Caco-2 (cell line): ENCODE measurements at regions of chr10 and their contacts with region 1.

Region 1: DNA sequence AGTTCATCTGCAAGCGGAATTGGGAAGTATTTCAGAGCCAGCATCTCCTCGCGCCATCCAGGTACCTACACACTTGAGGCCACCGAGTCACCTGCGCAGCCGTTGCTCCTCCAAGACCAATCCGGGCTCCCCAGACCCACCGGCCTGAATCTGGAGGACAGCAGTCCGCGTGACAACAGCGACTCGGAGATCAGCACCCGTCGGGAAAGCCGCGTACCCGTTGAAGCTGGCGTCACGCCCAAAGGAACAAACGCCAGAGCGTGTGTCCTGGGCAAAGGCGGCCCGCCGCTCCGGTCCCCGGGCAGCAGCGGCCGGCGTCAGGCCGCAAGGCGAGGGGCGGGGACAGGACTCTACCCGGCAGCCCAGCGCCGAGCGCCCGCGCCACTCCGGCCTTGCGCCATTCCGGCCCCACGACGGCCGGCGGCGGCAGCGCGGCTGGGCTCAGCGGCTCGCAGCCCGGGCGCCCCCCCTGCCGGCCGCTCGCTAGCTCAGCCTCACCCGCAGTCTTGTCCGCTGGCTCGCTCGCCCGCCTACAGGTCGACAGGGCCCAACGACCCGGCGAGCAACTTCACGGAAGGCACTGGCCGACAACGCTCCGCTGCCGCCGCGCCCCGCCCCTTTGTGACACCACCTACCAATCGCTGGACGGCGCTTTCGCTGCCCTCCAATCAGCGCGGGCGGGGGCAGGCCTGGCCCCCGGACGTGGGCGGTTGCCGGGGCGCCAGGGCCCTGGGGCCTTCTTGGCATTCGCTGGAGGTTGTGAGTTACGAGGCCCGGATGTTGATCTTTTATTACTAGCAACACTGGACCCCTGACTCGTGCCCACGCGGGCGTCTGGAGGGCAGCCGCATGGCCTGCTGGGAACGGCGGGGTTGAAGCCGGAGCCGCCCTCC is at the start of gene ZFAND4:
- DNase-seq: peak; percentile 99 to 100
- H3K4me3 ChIP-seq: peak within 1 kb of the TSS; percentile 62
- H3K4me3 Mint-ChIP-seq: peak within 1 kb of the TSS; percentile 80
- H3K27ac Mint-ChIP-seq: peak within 1 kb of the TSS; percentile 55
- H3K4me1 ChIP-seq: 0 out of 2 replicates have a peak, but pooled peaks cover 5% of the 10 kb centered on the region
- H3K4me1 Mint-ChIP-seq: peaks cover 7% of the 10 kb centered on the region
- H3K27me3 ChIP-seq: no peaks in the 10 kb centered on the region
- H3K27me3 Mint-ChIP-seq: peaks cover 12% of the 10 kb centered on the region
- CTCF ChIP-seq: peak; percentile 79 to 80
- total RNA-seq, gene ZFAND4: 8.8 and 9.3 TPM in 2 replicates

Region 2: GRCh38 chr10:45235798-45236231 is 436.6 kb before region 1 on chr10:
- CTCF ChIA-PET with region 1: no interaction called
- POLR2A ChIA-PET with region 1: no interaction called
- intact Hi-C with region 1: loop called (anchors 1 kb)
- DNase-seq: no peak
- H3K4me3 ChIP-seq: no peak overlapping the region
- H3K4me3 Mint-ChIP-seq: no peak overlapping the region
- H3K27ac Mint-ChIP-seq: no peak overlapping the region
- H3K4me1 ChIP-seq: no peaks in the 10 kb centered on the region
- H3K4me1 Mint-ChIP-seq: no peaks in the 10 kb centered on the region
- H3K27me3 ChIP-seq: no peaks in the 10 kb centered on the region
- H3K27me3 Mint-ChIP-seq: peaks cover 11% of the 10 kb centered on the region
- CTCF ChIP-seq: no peak

Region 3: DNA sequence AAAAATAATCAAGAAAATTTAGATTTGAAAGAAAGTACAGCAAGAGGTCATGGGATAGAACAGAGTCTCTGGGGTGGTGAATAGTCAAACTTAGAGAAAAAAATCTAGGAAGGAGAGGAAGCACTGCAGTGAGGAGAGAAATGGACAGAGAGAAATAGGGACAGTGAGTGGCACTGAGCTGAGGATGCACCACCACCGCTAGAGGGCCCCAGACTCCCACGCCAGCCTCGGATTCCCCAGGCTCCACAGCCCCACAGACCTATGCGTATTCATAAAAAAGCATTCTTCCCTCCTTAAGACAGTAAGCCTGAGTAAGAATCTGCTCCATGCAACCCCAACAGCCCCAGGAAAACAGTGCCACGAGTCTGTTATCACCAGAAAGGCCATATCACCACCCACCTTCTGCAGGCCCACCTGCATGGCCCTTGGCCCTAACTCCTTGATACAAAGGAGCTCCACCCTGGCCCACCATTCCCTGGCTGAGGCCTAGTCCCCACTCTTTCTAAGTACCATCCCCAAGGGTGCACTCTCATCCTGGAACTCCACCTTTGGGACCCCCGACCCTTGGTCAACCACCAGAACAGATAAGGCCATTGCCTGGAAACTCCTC is 207.4 kb before region 1 on chr10:
- CTCF ChIA-PET with region 1: interaction called, 18 read pairs
- POLR2A ChIA-PET with region 1: no interaction called
- intact Hi-C with region 1: loop called (anchors 1 kb)
- DNase-seq: peak; percentile 75 to 88
- H3K4me3 ChIP-seq: no peak overlapping the region
- H3K4me3 Mint-ChIP-seq: no peak overlapping the region
- H3K27ac Mint-ChIP-seq: no peak overlapping the region
- H3K4me1 ChIP-seq: 0 out of 2 replicates have a peak, but pooled peaks cover under 1% of the 10 kb centered on the region
- H3K4me1 Mint-ChIP-seq: no peaks in the 10 kb centered on the region
- H3K27me3 ChIP-seq: no peaks in the 10 kb centered on the region
- H3K27me3 Mint-ChIP-seq: peaks cover 3% of the 10 kb centered on the region
- CTCF ChIP-seq: peak; percentile 98 to 99

Region 4: DNA sequence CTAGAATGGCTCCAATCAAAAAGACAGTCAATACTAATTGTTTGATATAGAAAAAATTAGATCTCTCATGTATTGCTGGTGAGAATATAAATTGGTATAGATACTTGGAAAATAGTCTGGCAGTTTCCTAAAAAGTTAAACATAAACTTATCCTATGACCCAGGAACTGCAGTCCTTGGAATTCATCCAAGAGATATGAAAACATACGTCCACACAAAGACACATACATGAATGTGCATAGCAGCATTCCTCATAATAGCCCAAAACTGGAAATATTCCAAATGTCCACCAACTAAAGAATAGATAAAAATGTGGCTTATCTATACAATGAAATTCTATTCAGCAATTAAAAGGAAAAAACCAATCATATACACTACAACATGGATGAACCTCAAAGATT is 128.2 kb before region 1 on chr10:
- CTCF ChIA-PET with region 1: no interaction called
- POLR2A ChIA-PET with region 1: no interaction called
- intact Hi-C with region 1: no loop called
- DNase-seq: no peak
- H3K4me3 ChIP-seq: no peak overlapping the region
- H3K4me3 Mint-ChIP-seq: no peak overlapping the region
- H3K27ac Mint-ChIP-seq: no peak overlapping the region
- H3K4me1 ChIP-seq: no peaks in the 10 kb centered on the region
- H3K4me1 Mint-ChIP-seq: no peaks in the 10 kb centered on the region
- H3K27me3 ChIP-seq: no peaks in the 10 kb centered on the region
- H3K27me3 Mint-ChIP-seq: no peaks in the 10 kb centered on the region
- CTCF ChIP-seq: no peak

Region 5: GRCh38 chr10:45557275-45557905 is 115.0 kb before region 1 on chr10:
- CTCF ChIA-PET with region 1: no interaction called
- POLR2A ChIA-PET with region 1: no interaction called
- intact Hi-C with region 1: loop called (anchors 5 kb)
- DNase-seq: no peak
- H3K4me3 ChIP-seq: no peak overlapping the region
- H3K4me3 Mint-ChIP-seq: no peak overlapping the region
- H3K27ac Mint-ChIP-seq: no peak overlapping the region
- H3K4me1 ChIP-seq: peaks cover 4% of the 10 kb centered on the region; the same call in 1 of the 2 replicates
- H3K4me1 Mint-ChIP-seq: peaks cover 7% of the 10 kb centered on the region
- H3K27me3 ChIP-seq: no peaks in the 10 kb centered on the region
- H3K27me3 Mint-ChIP-seq: no peaks in the 10 kb centered on the region
- CTCF ChIP-seq: no peak

Region 6: GRCh38 chr10:45624724-45625123 is 47.7 kb before region 1 on chr10:
- CTCF ChIA-PET with region 1: no interaction called
- POLR2A ChIA-PET with region 1: no interaction called
- intact Hi-C with region 1: loop called (anchors 1 kb)
- DNase-seq: no peak
- H3K4me3 ChIP-seq: no peak overlapping the region
- H3K4me3 Mint-ChIP-seq: no peak overlapping the region
- H3K27ac Mint-ChIP-seq: no peak overlapping the region
- H3K4me1 ChIP-seq: no peaks in the 10 kb centered on the region
- H3K4me1 Mint-ChIP-seq: no peaks in the 10 kb centered on the region
- H3K27me3 ChIP-seq: no peaks in the 10 kb centered on the region
- H3K27me3 Mint-ChIP-seq: no peaks in the 10 kb centered on the region
- CTCF ChIP-seq: no peak